B cell (primary cell): ENCODE measurements at regions of chr18 and their contacts with region 1.

Region 1: DNA sequence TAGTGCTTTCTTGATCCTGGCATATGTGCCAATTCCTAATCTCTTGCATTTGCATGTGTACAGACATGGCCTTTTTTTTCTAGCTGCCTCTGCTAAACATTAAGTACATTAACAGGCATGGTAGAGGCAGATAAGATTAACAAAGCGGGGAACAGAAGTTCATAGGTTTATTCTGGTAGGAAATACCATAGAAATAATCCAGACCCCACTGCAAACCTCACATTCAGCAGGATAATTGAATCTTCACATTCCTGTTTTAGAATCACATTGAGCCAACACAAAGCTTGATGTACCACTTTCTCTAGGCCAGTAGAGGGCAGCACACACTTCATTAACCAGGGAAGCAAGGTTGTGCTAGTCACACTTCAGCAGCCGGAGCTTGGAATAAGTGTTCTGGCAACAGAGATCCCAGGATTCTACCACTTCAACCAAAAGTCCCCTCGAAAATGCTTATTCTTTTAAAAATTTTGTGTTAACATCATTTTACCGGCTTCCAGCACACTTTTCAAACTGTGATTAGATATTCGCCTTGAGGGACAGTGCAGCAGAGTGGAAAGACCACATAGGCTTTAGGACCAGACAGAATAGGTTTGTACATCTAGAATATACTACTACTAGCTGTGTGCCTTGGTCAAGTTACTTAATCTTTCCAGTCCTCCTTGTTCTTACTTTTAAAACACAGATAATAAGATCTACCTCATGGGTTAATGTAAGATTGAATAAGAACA is 420.2 kb upstream of the CHST9 start:
- DNase-seq: peak; percentile 12
- ATAC-seq: no peak
- H3K4me3 ChIP-seq: no peak overlapping the region
- H3K4me3 Mint-ChIP-seq: no peak overlapping the region
- H3K27ac ChIP-seq: no peak overlapping the region
- H3K27ac Mint-ChIP-seq: no peak overlapping the region
- H3K4me1 ChIP-seq: no peaks in the 10 kb centered on the region
- H3K4me1 Mint-ChIP-seq: no peaks in the 10 kb centered on the region
- H3K27me3 ChIP-seq: no peaks in the 10 kb centered on the region
- H3K27me3 Mint-ChIP-seq: no peaks in the 10 kb centered on the region
- CTCF ChIP-seq: peak; percentile 73

Region 2: DNA sequence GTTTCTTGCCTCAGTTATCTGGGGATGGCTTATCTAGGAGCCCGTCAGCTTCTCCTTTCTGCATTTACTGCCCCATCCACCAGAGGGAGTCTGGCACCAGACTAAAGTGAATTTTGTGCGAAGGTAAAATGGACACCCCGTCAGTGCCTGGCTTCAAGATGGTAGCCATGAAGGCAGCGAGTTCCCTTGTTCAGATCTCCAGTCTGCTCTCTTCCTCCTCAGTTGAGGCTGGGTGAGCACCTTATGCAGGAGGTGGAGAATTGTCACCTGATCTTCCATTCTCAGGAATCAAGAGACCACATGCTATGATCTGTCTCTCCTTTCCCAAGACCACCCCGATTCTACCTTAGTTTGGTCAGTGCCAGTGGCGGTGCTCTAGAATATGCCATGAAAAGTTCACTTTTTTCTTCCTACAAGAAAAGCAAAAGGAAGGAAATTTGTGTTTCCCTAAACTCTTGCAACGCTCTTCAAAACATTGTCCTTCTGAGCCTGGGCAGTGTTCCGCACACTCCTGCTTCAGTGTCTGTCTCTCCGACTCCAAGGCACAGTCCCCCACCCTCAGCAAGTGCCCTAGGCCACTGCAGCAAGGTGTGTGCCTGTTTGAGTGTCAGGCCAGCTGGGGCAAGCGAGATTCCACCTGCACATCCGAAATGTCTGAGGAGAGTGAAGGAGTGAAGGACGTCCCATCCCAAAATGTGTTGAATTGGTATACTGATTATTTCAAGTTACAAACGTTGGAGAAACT is 1683.4 kb before region 1 on chr18:
- CTCF ChIA-PET with region 1: no interaction called
- POLR2A ChIA-PET with region 1: no interaction called
- intact Hi-C with region 1: loop called (anchors 10 kb)
- DNase-seq: peak; percentile 49
- ATAC-seq: peak; percentile 36
- H3K4me3 ChIP-seq: no peak overlapping the region
- H3K4me3 Mint-ChIP-seq: no peak overlapping the region
- H3K27ac ChIP-seq: no peak overlapping the region
- H3K27ac Mint-ChIP-seq: no peak overlapping the region
- H3K4me1 ChIP-seq: peaks cover 0 to 3% of the 10 kb centered on the region in 2 donors
- H3K4me1 Mint-ChIP-seq: no peaks in the 10 kb centered on the region
- H3K27me3 ChIP-seq: peaks cover 0 to 3% (median 0%) of the 10 kb centered on the region in 4 experiments
- H3K27me3 Mint-ChIP-seq: peaks cover 8% of the 10 kb centered on the region
- CTCF ChIP-seq: peak; percentile 70

Region 3: DNA sequence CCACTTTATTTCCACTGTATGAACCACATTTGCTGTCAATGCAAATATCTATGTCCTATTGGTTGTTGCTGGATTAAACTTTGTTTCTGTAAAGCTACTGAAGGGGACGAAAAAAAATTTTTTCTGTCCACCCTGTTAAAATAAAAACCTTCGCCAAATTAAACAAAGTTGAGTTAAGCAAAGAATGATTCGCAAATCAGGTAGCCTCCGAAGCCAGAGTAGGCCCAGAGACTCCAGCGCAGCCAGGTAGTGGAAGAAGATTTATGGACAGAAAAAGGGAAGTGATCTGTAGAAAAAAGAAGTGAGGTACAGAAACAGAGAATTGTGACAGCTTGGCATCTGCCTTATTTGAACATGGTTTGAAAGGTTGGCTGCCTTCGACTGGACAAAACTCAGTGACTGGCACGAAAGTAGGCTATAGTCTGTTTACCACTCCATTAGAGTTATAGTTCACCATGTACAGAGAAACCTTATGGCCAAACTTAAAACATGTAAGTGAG is 10.1 kb after region 1 on chr18:
- CTCF ChIA-PET with region 1: interaction called, 10 read pairs
- POLR2A ChIA-PET with region 1: no interaction called
- intact Hi-C with region 1: no loop called
- DNase-seq: no peak
- ATAC-seq: no peak
- H3K4me3 ChIP-seq: no peak overlapping the region
- H3K4me3 Mint-ChIP-seq: no peak overlapping the region
- H3K27ac ChIP-seq: no peak overlapping the region
- H3K27ac Mint-ChIP-seq: no peak overlapping the region
- H3K4me1 ChIP-seq: no peaks in the 10 kb centered on the region
- H3K4me1 Mint-ChIP-seq: no peaks in the 10 kb centered on the region
- H3K27me3 ChIP-seq: no peaks in the 10 kb centered on the region
- H3K27me3 Mint-ChIP-seq: no peaks in the 10 kb centered on the region
- CTCF ChIP-seq: no peak